ENCODE measurements at regions of chr11 and their contacts with region 1.

Region 1: DNA sequence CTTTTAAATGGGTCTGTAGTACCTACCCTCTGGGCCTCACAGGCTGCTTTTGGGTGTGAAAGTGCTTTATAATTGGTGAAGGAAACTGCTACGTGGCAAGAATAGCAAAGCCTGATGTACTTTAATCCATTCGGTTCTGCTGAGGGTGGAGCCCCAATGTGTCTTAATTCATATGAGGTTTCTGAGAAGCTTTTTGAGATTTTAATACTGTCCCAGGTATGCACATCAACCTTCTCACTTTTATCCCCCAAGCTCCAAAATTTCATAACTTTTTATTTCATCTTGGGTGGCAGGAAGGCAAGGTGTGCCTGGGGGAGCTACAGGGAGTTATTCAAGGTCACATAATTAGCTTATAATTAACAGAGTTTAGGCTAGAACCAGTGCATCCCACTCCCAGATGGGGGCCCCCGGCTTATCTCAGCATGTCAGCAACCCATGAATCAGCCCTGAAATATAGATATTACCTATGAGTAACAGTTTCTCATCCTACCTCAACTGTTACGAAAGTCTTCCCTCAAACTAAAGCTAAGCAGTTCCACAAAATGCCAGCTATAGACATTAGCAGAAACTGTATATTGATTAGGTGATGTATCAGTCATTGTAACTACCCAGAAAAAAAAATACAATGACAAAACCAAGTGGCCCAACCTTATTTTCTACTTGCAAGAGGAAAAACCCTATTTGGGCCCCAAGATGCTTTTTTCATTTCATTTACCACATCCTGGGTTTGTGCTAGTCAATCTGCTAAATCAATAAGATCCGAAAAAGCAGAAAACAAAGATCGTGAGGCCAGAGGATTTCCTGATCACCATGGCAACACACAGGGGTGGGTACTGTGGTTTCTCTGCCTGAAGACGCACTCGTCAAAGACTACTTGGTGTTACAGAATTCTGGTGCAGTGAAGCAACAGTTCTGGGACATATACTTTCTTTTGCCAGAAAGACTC is 26.7 kb downstream of the CD44 start:
- DNase-seq: peak; percentile 95
- H3K4me3 Mint-ChIP-seq: peak overlapping the region; percentile 71
- H3K27ac Mint-ChIP-seq: peak overlapping the region; percentile 99
- H3K4me1 Mint-ChIP-seq: peaks cover 99% of the 10 kb centered on the region
- H3K27me3 Mint-ChIP-seq: no peaks in the 10 kb centered on the region

Region 2: DNA sequence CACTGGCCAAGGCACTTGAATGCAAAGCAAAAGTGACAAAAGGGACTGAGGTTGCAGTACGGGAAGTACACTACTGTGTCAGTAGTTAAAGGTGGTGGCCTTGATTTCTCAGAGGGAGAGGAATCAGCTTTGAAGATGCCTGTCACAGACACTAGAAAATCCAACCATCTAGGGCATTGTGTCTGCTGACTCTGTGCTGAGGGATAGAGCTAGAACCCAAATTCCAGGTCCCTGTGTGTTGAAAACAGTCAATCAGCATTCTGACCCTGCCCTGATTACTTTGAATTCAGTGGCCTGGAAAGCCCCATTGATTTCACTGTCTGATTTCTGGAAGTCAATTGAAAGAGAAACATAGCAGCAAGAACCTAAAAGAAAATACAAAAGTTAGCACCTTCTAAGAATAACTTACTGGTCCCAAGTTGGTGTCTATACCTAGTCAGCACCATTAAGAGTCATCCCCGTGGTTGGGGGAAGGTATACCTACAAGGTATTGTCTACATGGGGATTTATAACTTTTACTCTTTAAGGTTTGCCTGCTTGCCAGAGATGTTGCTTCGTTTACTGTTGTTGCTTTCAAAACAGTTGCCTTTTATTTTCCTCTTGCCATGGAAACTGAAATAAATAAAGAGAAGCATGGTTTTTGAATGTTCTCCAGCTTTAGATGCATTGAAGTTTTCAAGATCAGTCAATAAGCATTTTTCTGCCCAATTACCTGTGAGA is 152.0 kb before region 1 on chr11:
- CTCF ChIA-PET with region 1: interaction called, 6 read pairs
- POLR2A ChIA-PET with region 1: interaction called, 12 read pairs
- intact Hi-C with region 1: loop called (anchors 1 kb)
- DNase-seq: peak; percentile 53
- H3K4me3 Mint-ChIP-seq: peak overlapping the region; percentile 58
- H3K27ac Mint-ChIP-seq: peak overlapping the region; percentile 92
- H3K4me1 Mint-ChIP-seq: peaks cover 44% of the 10 kb centered on the region
- H3K27me3 Mint-ChIP-seq: peaks cover 4% of the 10 kb centered on the region

Region 3: GRCh38 chr11:35066783-35067423 is 98.8 kb before region 1 on chr11:
- CTCF ChIA-PET with region 1: no interaction called
- POLR2A ChIA-PET with region 1: no interaction called
- intact Hi-C with region 1: no loop called
- DNase-seq: peak; percentile 74
- H3K4me3 Mint-ChIP-seq: no peak overlapping the region
- H3K27ac Mint-ChIP-seq: peak overlapping the region; percentile 52
- H3K4me1 Mint-ChIP-seq: peaks cover 36% of the 10 kb centered on the region
- H3K27me3 Mint-ChIP-seq: no peaks in the 10 kb centered on the region

Region 4: GRCh38 chr11:35082321-35083182 is 83.1 kb before region 1 on chr11:
- CTCF ChIA-PET with region 1: no interaction called
- POLR2A ChIA-PET with region 1: interaction called, 6 read pairs
- intact Hi-C with region 1: loop called (anchors 1 kb)
- DNase-seq: peak; percentile 90
- H3K4me3 Mint-ChIP-seq: peak overlapping the region; percentile 62
- H3K27ac Mint-ChIP-seq: peak overlapping the region; percentile 81
- H3K4me1 Mint-ChIP-seq: peaks cover 93% of the 10 kb centered on the region
- H3K27me3 Mint-ChIP-seq: no peaks in the 10 kb centered on the region

Region 5: DNA sequence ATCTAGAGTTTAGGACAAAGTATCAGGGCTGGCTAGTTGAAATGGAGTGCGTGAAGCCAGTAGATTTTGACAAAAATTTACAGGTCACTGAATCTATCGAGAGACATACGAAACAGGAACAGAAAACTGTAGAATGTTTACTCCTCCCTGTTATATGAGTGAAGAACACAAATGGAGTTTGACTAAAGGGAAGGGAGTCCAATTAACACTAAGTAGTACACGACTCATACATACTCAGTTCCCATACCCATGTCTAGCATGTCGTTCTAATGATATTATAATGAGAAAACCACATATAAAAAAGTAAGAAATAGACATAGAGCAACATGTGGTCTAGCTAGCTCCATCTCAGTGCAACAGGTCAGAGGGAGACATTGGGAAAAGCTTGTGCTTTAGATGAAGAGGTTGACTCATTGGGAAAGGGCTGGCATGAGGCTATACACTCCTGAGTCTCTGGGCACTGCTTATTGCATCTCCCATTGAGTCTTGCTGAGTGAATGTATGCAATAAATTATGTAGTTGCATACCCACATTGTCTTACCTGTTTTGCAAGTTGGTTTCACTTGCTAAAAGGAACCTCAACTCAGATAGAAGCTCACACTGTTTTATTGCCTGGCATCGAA is 16.7 kb after region 1 on chr11:
- CTCF ChIA-PET with region 1: interaction called, 55 read pairs
- POLR2A ChIA-PET with region 1: interaction called, 60 read pairs
- intact Hi-C with region 1: loop called (anchors 1 kb)
- DNase-seq: no peak
- H3K4me3 Mint-ChIP-seq: no peak overlapping the region
- H3K27ac Mint-ChIP-seq: peak overlapping the region; percentile 76
- H3K4me1 Mint-ChIP-seq: peaks cover 82% of the 10 kb centered on the region
- H3K27me3 Mint-ChIP-seq: no peaks in the 10 kb centered on the region

Region 6: DNA sequence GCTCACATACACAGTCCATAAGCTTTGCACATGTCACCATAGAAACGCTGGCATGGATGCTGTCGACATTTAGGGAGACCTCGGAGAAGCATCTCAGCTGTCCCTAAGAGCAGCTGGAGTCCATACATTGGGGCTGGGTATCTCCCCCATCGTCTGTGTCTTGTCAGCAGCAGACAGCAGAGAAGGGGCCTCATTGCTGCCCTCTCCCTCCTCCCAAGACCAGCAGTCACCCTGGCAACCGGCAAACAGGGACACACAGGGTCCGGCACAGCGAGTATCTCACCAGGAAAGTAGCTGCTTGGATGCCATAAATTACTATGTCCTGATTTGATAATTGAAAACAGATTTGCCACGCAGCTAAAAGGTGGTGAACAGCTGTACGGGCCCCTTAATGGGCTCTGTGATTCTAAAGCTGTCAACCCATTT is 57.7 kb after region 1 on chr11:
- CTCF ChIA-PET with region 1: no interaction called
- POLR2A ChIA-PET with region 1: no interaction called
- intact Hi-C with region 1: no loop called
- DNase-seq: no peak
- H3K4me3 Mint-ChIP-seq: no peak overlapping the region
- H3K27ac Mint-ChIP-seq: peak overlapping the region; percentile 13
- H3K4me1 Mint-ChIP-seq: peaks cover 15% of the 10 kb centered on the region
- H3K27me3 Mint-ChIP-seq: no peaks in the 10 kb centered on the region

Region 7: GRCh38 chr11:35337136-35337918 is 171.6 kb after region 1 on chr11:
- CTCF ChIA-PET with region 1: no interaction called
- POLR2A ChIA-PET with region 1: no interaction called
- intact Hi-C with region 1: loop called (anchors 1 kb)
- DNase-seq: peak; percentile 35
- H3K4me3 Mint-ChIP-seq: no peak overlapping the region
- H3K27ac Mint-ChIP-seq: peak overlapping the region; percentile 56
- H3K4me1 Mint-ChIP-seq: peaks cover 40% of the 10 kb centered on the region
- H3K27me3 Mint-ChIP-seq: peaks cover 2% of the 10 kb centered on the region